ENCODE measurements at regions of chr17 and their contacts with region 1.

Region 1: DNA sequence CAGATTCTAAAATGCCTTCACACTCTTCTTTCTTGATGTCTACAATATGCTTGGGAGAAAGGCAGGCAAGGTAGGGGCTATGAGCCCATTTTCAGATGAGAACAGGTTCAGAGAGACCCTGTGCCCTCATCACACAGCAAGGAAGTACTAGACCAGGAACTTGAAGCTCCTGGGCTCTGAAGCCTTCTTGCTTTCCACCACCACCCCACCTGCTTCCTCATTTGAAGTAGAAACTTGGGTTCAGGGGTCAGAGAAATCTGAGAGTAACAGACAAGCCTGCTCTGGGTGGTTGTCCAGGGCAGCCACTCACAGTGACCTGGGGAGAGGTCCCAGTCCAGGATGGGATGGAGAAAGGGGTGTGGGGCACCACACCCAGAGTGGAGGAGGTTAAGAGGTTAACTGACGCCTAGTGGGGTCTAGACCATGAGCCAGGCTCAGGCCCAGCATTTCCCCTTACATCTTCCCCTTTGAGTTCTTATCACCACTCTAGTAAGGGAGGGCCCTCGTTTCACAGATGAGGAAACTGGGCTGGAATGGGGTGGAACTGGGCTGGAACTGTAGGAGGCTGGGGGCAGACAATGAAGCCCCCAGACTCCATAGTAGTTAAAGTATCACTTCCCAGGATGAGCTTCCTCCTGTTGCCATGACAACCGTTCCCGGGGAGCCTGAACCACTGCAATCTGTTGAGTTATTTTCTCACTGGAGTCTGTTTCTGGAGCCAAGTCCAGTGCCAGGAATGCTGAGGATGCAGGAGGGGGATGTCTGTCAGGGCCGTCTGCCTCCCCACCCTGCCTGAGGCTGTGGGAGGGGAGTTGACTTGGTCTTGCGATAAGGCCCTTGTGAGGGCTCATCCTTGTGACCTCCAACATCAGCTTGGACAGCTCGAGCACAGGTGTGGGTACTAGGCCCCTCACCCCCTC is 16.2 kb upstream of the PHF12 start:
- DNase-seq: no peak
- H3K4me3 Mint-ChIP-seq: no peak overlapping the region
- H3K27ac Mint-ChIP-seq: no peak overlapping the region
- H3K4me1 Mint-ChIP-seq: no peaks in the 10 kb centered on the region
- H3K27me3 Mint-ChIP-seq: peaks cover 42% of the 10 kb centered on the region
- CTCF ChIP-seq: no peak

Region 2: GRCh38 chr17:29090750-29091603 is 123.5 kb after region 1 on chr17:
- CTCF ChIA-PET with region 1: interaction called, 12 read pairs
- POLR2A ChIA-PET with region 1: interaction called, 6 read pairs
- intact Hi-C with region 1: no loop called
- DNase-seq: no peak
- H3K4me3 Mint-ChIP-seq: no peak overlapping the region
- H3K27ac Mint-ChIP-seq: no peak overlapping the region
- H3K4me1 Mint-ChIP-seq: no peaks in the 10 kb centered on the region
- H3K27me3 Mint-ChIP-seq: no peaks in the 10 kb centered on the region
- CTCF ChIP-seq: no peak

Region 3: GRCh38 chr17:29102060-29102459 is 134.6 kb after region 1 on chr17:
- CTCF ChIA-PET with region 1: interaction called, 20 read pairs
- POLR2A ChIA-PET with region 1: no interaction called
- intact Hi-C with region 1: no loop called
- DNase-seq: no peak
- H3K4me3 Mint-ChIP-seq: peak overlapping the region; percentile 54
- H3K27ac Mint-ChIP-seq: peak overlapping the region; percentile 77
- H3K4me1 Mint-ChIP-seq: peaks cover 15% of the 10 kb centered on the region
- H3K27me3 Mint-ChIP-seq: no peaks in the 10 kb centered on the region
- CTCF ChIP-seq: no peak

Region 4: DNA sequence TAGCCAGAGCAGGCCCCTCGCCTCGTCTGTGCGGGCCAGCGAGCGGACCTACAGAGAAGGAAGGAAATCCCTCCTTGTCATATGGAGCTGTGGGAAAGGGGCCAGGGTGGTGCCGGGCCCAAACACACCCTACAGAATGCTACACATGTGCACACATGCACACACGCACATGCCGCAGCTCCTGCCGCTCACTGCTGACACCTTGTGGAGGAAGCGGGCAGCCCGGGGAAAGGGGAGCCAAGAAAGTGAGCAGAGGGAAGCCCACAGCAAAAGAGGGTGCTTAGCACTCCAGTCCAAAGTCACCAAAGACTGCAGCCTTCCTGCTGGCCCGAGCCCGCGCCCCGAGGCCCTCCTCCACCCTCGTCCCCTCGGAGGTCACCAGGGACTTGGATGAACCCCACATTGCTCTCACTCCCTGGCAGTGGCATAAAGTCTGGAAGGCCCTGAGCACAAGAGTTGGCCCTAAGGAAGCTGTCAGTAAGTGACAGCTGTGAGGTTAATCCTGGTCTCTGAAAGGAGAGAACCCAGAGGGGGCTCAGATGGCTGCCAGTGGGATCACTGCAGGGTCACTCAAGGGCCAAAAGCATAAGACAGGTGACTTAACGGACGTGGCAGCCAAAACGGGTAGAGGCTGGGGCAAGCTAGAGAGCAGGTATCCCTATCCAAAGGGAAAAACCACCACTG is 144.5 kb after region 1 on chr17:
- CTCF ChIA-PET with region 1: interaction called, 279 read pairs
- POLR2A ChIA-PET with region 1: interaction called, 27 read pairs
- intact Hi-C with region 1: loop called (anchors 1 kb)
- DNase-seq: peak; percentile 78
- H3K4me3 Mint-ChIP-seq: no peak overlapping the region
- H3K27ac Mint-ChIP-seq: no peak overlapping the region
- H3K4me1 Mint-ChIP-seq: peaks cover 10% of the 10 kb centered on the region
- H3K27me3 Mint-ChIP-seq: no peaks in the 10 kb centered on the region
- CTCF ChIP-seq: peak; percentile 89

Measured in MCF 10A (cell line).